ENCODE measurements at regions of chr17 and their contacts with region 1.

Region 1: GRCh38 chr17:5399767-5400166 is 19.7 kb downstream of the NUP88 start:
- DNase-seq: no peak
- ATAC-seq: no peak
- H3K4me3 ChIP-seq: no peak overlapping the region
- H3K4me3 Mint-ChIP-seq: no peak overlapping the region
- H3K27ac ChIP-seq: no peak overlapping the region
- H3K27ac Mint-ChIP-seq: no peak overlapping the region
- H3K4me1 ChIP-seq: no peaks in the 10 kb centered on the region
- H3K4me1 Mint-ChIP-seq: peaks cover 3% of the 10 kb centered on the region
- H3K27me3 ChIP-seq: no peaks in the 10 kb centered on the region
- H3K27me3 Mint-ChIP-seq: no peaks in the 10 kb centered on the region
- CTCF ChIP-seq: no peak

Region 2: GRCh38 chr17:5413682-5414081 is 13.9 kb after region 1 on chr17:
- CTCF ChIA-PET with region 1: no interaction called
- POLR2A ChIA-PET with region 1: interaction called, 10 read pairs
- intact Hi-C with region 1: no loop called
- DNase-seq: no peak
- ATAC-seq: no peak
- H3K4me3 ChIP-seq: no peak overlapping the region
- H3K4me3 Mint-ChIP-seq: no peak overlapping the region
- H3K27ac ChIP-seq: peak overlapping the region in 1 of 2 donors; percentile 8
- H3K27ac Mint-ChIP-seq: no peak overlapping the region
- H3K4me1 ChIP-seq: peaks cover 16 to 27% of the 10 kb centered on the region in 2 donors
- H3K4me1 Mint-ChIP-seq: peaks cover 51% of the 10 kb centered on the region
- H3K27me3 ChIP-seq: no peaks in the 10 kb centered on the region
- H3K27me3 Mint-ChIP-seq: no peaks in the 10 kb centered on the region
- CTCF ChIP-seq: no peak

Measured in B cell (primary cell).